ENCODE measurements at regions of chr12 and their contacts with region 1.

Region 1: DNA sequence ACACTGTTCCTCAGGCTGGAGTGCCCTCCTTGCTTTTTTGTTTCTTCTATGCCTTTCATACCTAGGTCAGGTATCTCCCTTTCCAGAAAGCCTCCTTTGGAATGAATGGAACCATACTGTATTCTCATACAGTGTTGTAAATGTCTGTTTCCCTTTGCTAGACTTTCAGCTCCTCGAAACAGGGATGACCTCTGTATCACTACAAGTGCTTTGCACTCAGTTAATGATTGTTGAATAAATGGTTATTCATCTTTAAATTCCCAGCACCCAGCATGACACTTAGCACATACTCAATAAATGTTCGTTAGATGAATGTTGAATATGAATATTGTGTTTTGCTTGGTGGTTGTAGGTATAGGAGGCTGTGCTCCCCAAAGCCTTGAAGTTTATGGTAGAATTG is 5.9 kb upstream of the TULP3 start:
- DNase-seq: no peak
- ATAC-seq: no peak
- H3K4me3 ChIP-seq: no peak overlapping the region
- H3K4me3 Mint-ChIP-seq: no peak overlapping the region
- H3K27ac ChIP-seq: peak overlapping the region in 1 of 2 donors; percentile 51
- H3K27ac Mint-ChIP-seq: peak overlapping the region; percentile 68
- H3K4me1 ChIP-seq: peaks cover 7 to 9% of the 10 kb centered on the region in 2 donors
- H3K4me1 Mint-ChIP-seq: peaks cover 22% of the 10 kb centered on the region
- H3K27me3 ChIP-seq: no peaks in the 10 kb centered on the region
- H3K27me3 Mint-ChIP-seq: no peaks in the 10 kb centered on the region
- CTCF ChIP-seq: no peak

Region 2: DNA sequence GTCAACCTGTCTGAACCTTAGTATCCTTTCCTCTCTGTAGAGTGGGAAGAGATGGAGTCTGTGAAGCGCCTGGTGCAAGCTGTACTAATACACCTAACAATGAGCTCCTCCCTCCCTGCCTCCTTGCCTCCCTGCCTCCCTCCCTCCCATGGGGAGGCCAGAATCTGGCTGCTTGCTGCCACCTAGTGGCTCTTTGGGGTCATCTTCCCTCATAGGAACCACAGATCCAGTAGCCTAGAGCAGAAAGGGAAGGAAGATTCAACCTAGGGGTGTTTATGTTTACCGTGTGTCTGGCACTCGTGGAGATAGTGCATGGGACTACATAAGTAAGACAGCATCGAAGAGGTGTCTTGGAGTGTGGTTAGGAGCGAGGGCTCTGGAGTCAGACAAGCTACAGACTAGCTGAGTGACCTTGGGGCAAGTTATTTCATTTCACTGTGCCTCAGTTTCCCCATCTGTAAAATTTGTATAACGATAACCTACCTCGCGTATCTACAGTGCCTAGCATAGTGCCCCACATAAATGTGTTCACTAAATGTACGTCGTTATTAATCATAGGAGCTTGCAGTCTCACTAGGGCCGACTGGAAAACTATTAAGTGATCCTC is 156.9 kb after region 1 on chr12:
- CTCF ChIA-PET with region 1: interaction called, 6 read pairs
- POLR2A ChIA-PET with region 1: no interaction called
- intact Hi-C with region 1: loop called (anchors 5 kb)
- DNase-seq: peak; percentile 70
- ATAC-seq: peak; percentile 52
- H3K4me3 ChIP-seq: no peak overlapping the region
- H3K4me3 Mint-ChIP-seq: peak overlapping the region; percentile 44
- H3K27ac ChIP-seq: no peak overlapping the region
- H3K27ac Mint-ChIP-seq: peak overlapping the region; percentile 53
- H3K4me1 ChIP-seq: peaks cover 17% of the 10 kb centered on the region in 2 donors
- H3K4me1 Mint-ChIP-seq: peaks cover 30% of the 10 kb centered on the region
- H3K27me3 ChIP-seq: peaks cover 0 to 24% (median 5%) of the 10 kb centered on the region in 4 experiments
- H3K27me3 Mint-ChIP-seq: peaks cover 36% of the 10 kb centered on the region
- CTCF ChIP-seq: peak; percentile 56

Region 3: GRCh38 chr12:3381059-3382047 is 496.5 kb after region 1 on chr12:
- CTCF ChIA-PET with region 1: no interaction called
- POLR2A ChIA-PET with region 1: no interaction called
- intact Hi-C with region 1: no loop called
- DNase-seq: no peak
- ATAC-seq: no peak
- H3K4me3 ChIP-seq: no peak overlapping the region
- H3K4me3 Mint-ChIP-seq: no peak overlapping the region
- H3K27ac ChIP-seq: no peak overlapping the region
- H3K27ac Mint-ChIP-seq: no peak overlapping the region
- H3K4me1 ChIP-seq: no peaks in the 10 kb centered on the region
- H3K4me1 Mint-ChIP-seq: no peaks in the 10 kb centered on the region
- H3K27me3 ChIP-seq: no peaks in the 10 kb centered on the region
- H3K27me3 Mint-ChIP-seq: peaks cover 41% of the 10 kb centered on the region
- CTCF ChIP-seq: no peak

Region 4: DNA sequence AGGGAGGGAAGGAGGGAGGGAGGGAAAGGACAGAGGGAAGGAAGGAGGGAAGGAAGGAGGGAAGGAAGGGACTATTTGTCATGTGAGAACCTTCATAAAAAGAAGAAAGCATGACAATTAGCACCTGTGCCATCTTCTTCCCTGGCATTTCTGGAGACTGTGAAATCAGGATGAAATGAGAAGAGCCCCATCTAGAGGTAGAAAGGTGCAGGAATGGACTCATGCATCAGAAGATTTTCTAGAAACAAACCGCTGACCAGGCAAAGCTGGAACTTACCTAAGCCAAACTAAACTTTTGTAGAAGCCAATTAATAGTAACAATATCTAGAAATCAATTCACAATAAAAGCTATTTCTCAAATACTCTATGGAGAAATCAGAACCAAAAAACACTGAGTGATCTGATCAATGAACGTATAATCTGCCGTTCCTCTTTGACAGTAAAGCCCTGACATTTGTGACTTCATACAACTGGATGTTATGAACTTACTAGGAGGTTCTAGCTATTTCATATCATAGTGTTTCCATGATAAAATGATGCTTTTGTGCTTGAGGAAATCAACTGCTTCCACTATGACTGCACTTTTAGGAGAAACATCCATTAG is 892.5 kb after region 1 on chr12:
- CTCF ChIA-PET with region 1: no interaction called
- POLR2A ChIA-PET with region 1: no interaction called
- intact Hi-C with region 1: no loop called
- DNase-seq: peak; percentile 52
- ATAC-seq: no peak
- H3K4me3 ChIP-seq: no peak overlapping the region
- H3K4me3 Mint-ChIP-seq: no peak overlapping the region
- H3K27ac ChIP-seq: no peak overlapping the region
- H3K27ac Mint-ChIP-seq: no peak overlapping the region
- H3K4me1 ChIP-seq: no peaks in the 10 kb centered on the region
- H3K4me1 Mint-ChIP-seq: no peaks in the 10 kb centered on the region
- H3K27me3 ChIP-seq: peaks cover 0 to 2% (median 0%) of the 10 kb centered on the region in 4 experiments
- H3K27me3 Mint-ChIP-seq: no peaks in the 10 kb centered on the region
- CTCF ChIP-seq: peak; percentile 71